ENCODE measurements at regions of chr1 and their contacts with region 1.

Region 1: DNA sequence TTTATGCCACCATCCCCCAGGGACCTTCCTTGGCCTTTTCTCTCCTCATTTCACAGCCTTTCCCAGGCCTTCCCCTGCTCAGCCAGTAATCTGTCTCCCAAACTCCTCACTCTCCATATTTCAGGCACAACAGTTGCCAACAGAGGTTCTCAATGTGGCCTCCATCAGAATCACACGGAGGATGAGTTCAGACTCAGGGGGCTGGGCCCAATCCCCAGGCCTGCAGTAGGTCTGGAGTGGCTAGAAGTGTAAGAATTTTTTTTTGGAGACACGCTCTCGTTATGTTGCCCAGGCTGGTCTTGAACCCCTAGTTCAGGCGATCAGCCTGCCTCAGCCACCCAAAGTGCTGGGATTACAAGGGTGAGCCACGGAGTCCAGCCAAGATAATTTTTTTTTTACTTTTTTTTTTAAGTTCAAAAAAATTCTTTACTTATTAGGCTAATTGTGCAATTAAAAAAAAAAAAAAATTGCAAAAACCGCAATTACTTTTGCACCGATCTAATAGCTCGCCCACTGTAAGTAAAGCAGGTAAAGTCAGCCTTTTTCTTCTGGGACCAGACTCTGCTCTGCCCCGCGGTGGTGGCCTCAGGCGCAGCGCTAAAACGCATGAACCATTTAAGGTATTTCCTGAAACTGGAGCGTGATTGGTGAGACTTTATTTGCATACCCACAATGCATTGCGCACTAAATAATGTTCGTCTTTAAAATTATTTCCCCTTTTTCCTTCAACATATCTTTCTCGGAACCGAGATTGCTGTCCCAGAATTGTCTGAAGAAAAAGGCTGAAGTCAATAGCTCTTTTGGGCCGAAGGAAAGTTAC is 18.7 kb downstream of the KIAA2013 start:
- DNase-seq: peak; percentile 91 to 95
- H3K4me3 ChIP-seq: no peak overlapping the region
- H3K4me3 Mint-ChIP-seq: peak overlapping the region; percentile 99
- H3K27ac Mint-ChIP-seq: peak overlapping the region; percentile 99
- H3K4me1 ChIP-seq: 0 out of 2 replicates have a peak, but pooled peaks cover 7% of the 10 kb centered on the region
- H3K4me1 Mint-ChIP-seq: peaks cover 14% of the 10 kb centered on the region
- H3K27me3 ChIP-seq: no peaks in the 10 kb centered on the region
- H3K27me3 Mint-ChIP-seq: peaks cover 5% of the 10 kb centered on the region
- CTCF ChIP-seq: peak in 1 of 2 experiments; percentile 72

Region 2: GRCh38 chr1:11805447-11806306 is 101.8 kb before region 1 on chr1 and contains the starts of genes CLCN6 and MTHFR:
- CTCF ChIA-PET with region 1: no interaction called
- POLR2A ChIA-PET with region 1: interaction called, 31 read pairs
- intact Hi-C with region 1: no loop called
- DNase-seq: peak; percentile 99
- H3K4me3 ChIP-seq: peak within 1 kb of the TSS; percentile 93
- H3K4me3 Mint-ChIP-seq: peak within 1 kb of the TSS; percentile 96
- H3K27ac Mint-ChIP-seq: peak within 1 kb of the TSS; percentile 94
- H3K4me1 ChIP-seq: peaks cover 21% of the 10 kb centered on the region
- H3K4me1 Mint-ChIP-seq: no peaks in the 10 kb centered on the region
- H3K27me3 ChIP-seq: no peaks in the 10 kb centered on the region
- H3K27me3 Mint-ChIP-seq: no peaks in the 10 kb centered on the region
- CTCF ChIP-seq: no peak
- total RNA-seq, gene CLCN6: 30.4 and 34.9 TPM in 2 replicates
- total RNA-seq, gene MTHFR: 27.8 and 28.6 TPM in 2 replicates

Region 3: GRCh38 chr1:11893907-11894251 is 13.6 kb before region 1 on chr1:
- CTCF ChIA-PET with region 1: no interaction called
- POLR2A ChIA-PET with region 1: interaction called, 11 read pairs
- intact Hi-C with region 1: no loop called
- DNase-seq: peak; percentile 77 to 82
- H3K4me3 ChIP-seq: no peak overlapping the region
- H3K4me3 Mint-ChIP-seq: no peak overlapping the region
- H3K27ac Mint-ChIP-seq: no peak overlapping the region
- H3K4me1 ChIP-seq: peaks cover 10% of the 10 kb centered on the region; the same call in 1 of the 2 replicates
- H3K4me1 Mint-ChIP-seq: peaks cover 9% of the 10 kb centered on the region
- H3K27me3 ChIP-seq: no peaks in the 10 kb centered on the region
- H3K27me3 Mint-ChIP-seq: peaks cover 5% of the 10 kb centered on the region
- CTCF ChIP-seq: peak; percentile 83 to 97

Region 4: DNA sequence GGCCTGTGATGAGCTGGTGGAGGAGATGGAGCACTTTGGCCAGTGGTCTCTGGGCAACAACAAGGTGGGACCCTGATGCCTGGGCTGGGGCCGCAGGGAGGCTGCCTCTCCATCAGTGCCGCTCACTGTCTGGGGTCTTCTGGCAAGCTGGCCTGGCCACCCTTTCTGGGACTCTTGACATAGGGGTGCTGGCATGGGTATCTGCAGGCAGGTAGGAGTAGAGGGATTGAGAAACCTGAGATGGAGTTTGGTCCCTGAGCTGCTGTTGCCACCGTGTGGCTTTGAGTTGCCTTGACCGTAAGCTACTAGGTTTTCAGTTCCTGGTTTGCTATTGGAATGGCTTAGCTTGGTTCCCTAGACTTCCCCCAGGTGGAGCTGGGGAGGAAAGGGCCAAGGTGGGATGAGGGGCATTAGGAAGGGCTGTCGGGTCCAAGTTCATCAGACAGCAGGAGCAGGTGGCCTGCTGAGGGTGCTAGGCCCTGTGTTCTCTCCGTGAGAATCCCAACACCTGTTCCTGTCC is 59.6 kb after region 1 on chr1:
- CTCF ChIA-PET with region 1: interaction called, 36 read pairs
- POLR2A ChIA-PET with region 1: interaction called, 44 read pairs
- intact Hi-C with region 1: loop called (anchors 1 kb)
- DNase-seq: peak; percentile 79 to 84
- H3K4me3 ChIP-seq: no peak overlapping the region
- H3K4me3 Mint-ChIP-seq: no peak overlapping the region
- H3K27ac Mint-ChIP-seq: no peak overlapping the region
- H3K4me1 ChIP-seq: peaks cover 15% of the 10 kb centered on the region
- H3K4me1 Mint-ChIP-seq: peaks cover 11% of the 10 kb centered on the region
- H3K27me3 ChIP-seq: no peaks in the 10 kb centered on the region
- H3K27me3 Mint-ChIP-seq: no peaks in the 10 kb centered on the region
- CTCF ChIP-seq: peak; percentile 67 to 94

Region 5: DNA sequence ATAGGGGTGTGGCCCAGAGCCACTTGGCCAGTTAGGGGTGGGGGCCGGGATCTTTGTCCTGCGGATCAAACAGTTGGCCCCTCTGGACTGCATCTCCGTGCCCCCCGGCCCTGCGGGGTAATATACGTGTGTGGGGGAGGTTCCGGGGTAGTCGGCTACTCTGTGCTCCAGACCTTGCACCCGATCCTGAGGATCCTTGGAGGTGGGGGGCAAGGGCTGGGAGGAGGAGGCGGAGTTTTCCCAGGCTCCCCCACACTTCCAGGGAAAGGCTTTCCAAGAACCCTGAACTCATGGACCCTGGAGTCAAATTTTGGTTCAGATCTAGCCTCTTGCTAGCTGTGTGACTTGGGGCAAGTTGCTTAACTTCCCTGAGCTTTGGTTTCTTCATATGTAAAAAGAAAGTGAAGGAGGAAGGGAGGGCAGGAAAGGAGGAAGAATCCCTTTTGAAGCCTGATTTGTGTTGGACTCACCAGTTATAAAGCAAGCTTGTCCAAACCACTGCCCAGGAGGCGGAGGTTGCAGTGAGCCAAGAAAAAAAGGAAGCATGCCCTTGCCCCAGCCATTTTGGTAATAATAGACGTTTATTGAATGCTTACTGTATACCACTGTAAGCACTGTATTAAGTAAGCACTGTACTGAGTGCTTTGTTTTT is 112.5 kb after region 1 on chr1:
- CTCF ChIA-PET with region 1: interaction called, 3 read pairs
- POLR2A ChIA-PET with region 1: interaction called, 30 read pairs
- intact Hi-C with region 1: no loop called
- DNase-seq: no peak
- H3K4me3 ChIP-seq: peak overlapping the region; percentile 81
- H3K4me3 Mint-ChIP-seq: peak overlapping the region; percentile 74
- H3K27ac Mint-ChIP-seq: peak overlapping the region; percentile 50
- H3K4me1 ChIP-seq: no peaks in the 10 kb centered on the region
- H3K4me1 Mint-ChIP-seq: no peaks in the 10 kb centered on the region
- H3K27me3 ChIP-seq: no peaks in the 10 kb centered on the region
- H3K27me3 Mint-ChIP-seq: no peaks in the 10 kb centered on the region
- CTCF ChIP-seq: no peak

Measured in Caco-2 (cell line).